ENCODE measurements at regions of chr4 and their contacts with region 1.

Region 1: DNA sequence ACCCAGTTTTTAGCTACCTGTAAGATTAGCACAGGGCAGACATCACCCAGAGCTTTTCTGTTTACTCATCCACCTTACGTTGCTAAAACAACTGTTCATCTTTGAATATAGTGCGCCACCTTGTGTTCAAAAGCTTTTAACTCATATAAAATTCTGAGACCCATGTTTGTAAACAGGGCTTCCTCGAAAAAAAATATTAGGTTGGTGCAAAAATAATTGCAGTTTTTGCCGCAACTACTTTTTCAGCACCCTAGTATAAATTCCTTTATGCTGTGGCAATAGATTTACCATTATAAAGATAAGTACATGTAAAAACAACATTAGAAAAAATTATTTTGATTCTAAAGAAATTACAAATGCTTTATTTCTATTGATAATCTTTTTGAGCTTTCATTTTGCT is 147.9 kb downstream of the LRBA start:
- DNase-seq: peak; percentile 50
- H3K4me3 ChIP-seq: no peak overlapping the region
- H3K27ac ChIP-seq: no peak overlapping the region
- H3K27me3 ChIP-seq: no peaks in the 10 kb centered on the region
- CTCF ChIP-seq: peak; percentile 65

Region 2: GRCh38 chr4:149987330-149988086 is 879.6 kb before region 1 on chr4:
- CTCF ChIA-PET with region 1: interaction called, 25 read pairs
- POLR2A ChIA-PET with region 1: no interaction called
- DNase-seq: no peak
- H3K4me3 ChIP-seq: no peak overlapping the region
- H3K27ac ChIP-seq: no peak overlapping the region
- H3K27me3 ChIP-seq: no peaks in the 10 kb centered on the region
- CTCF ChIP-seq: no peak

Region 3: GRCh38 chr4:150209140-150209829 is 657.9 kb before region 1 on chr4:
- CTCF ChIA-PET with region 1: interaction called, 12 read pairs
- POLR2A ChIA-PET with region 1: no interaction called
- DNase-seq: peak; percentile 44
- H3K4me3 ChIP-seq: no peak overlapping the region
- H3K27ac ChIP-seq: no peak overlapping the region
- H3K27me3 ChIP-seq: no peaks in the 10 kb centered on the region
- CTCF ChIP-seq: peak; percentile 71

Region 4: DNA sequence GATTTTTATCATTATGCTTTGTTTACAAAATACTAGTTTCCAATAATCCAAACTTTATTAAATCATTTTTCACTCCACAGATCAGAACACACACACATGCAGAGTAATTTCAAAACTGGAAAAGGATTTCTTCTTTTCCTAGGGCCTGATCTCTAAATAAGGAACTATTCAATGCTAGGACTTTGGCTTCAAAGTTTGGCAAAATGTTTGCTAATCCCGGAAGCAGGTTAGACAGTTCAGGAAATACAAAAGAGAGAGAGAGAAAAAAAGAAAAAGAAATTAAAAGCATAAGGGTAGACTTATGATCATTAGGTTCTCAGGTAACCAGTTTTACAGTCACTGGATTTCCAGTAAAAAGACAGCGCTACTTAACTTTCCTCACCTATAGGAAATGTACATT is 578.0 kb before region 1 on chr4:
- CTCF ChIA-PET with region 1: interaction called, 17 read pairs
- POLR2A ChIA-PET with region 1: no interaction called
- DNase-seq: no peak
- H3K4me3 ChIP-seq: no peak overlapping the region
- H3K27ac ChIP-seq: no peak overlapping the region
- H3K27me3 ChIP-seq: no peaks in the 10 kb centered on the region
- CTCF ChIP-seq: no peak

Region 5: GRCh38 chr4:150789864-150790263 is 77.3 kb before region 1 on chr4:
- CTCF ChIA-PET with region 1: interaction called, 12 read pairs
- POLR2A ChIA-PET with region 1: no interaction called
- DNase-seq: no peak
- H3K4me3 ChIP-seq: no peak overlapping the region
- H3K27ac ChIP-seq: no peak overlapping the region
- H3K27me3 ChIP-seq: no peaks in the 10 kb centered on the region
- CTCF ChIP-seq: no peak

Region 6: DNA sequence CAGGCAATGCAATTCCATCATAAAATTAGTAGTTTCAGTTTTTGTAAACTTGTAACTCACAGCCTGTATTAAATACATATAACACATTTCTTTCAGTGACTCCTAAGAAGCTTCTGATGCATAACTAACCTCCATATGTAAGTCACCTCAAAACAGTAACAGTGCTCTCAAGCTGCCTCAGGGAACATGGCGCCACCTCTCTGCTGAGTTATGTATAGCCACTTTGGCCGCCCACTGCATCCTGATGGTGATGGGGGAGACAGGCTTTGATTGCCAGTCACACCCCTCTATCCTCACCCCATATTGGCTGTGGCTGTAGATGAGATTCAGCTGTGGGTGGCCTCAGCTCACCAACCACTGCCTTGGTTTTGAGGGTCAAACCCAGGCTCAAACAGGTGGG is 93.7 kb after region 1 on chr4:
- CTCF ChIA-PET with region 1: no interaction called
- POLR2A ChIA-PET with region 1: no interaction called
- DNase-seq: no peak
- H3K4me3 ChIP-seq: no peak overlapping the region
- H3K27ac ChIP-seq: no peak overlapping the region
- H3K27me3 ChIP-seq: no peaks in the 10 kb centered on the region
- CTCF ChIP-seq: peak; percentile 43

Region 7: DNA sequence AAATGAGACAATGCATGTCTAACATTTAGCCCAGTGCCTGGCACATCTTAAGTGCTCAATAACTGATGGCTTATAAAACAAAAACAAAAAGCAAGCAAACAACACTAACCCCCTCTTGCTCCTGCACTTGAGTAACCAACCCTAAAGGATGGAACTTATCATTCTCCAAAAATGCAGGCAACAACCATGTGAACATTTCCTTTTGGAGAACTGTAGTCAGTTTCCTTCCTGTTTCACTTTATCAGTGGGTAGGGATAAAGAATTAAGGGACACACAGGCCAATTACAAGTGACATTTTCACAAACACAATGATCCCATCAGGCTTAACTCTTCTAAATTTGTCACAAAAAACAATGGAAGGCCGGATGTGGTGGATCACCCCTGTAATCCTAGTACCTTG is 262.7 kb after region 1 on chr4:
- CTCF ChIA-PET with region 1: no interaction called
- POLR2A ChIA-PET with region 1: no interaction called
- DNase-seq: no peak
- H3K4me3 ChIP-seq: no peak overlapping the region
- H3K27ac ChIP-seq: no peak overlapping the region
- H3K27me3 ChIP-seq: no peaks in the 10 kb centered on the region
- CTCF ChIP-seq: no peak

Measured in AG04450 (cell line).